ENCODE measurements at regions of chr2 and their contacts with region 1.

Region 1: GRCh38 chr2:28958689-28959088 is 22.4 kb upstream of the TOGARAM2 start:
- DNase-seq: peak; percentile 37
- H3K4me3 ChIP-seq: no peak overlapping the region; the same call in 1 of the 2 replicates
- CTCF ChIP-seq: peak; percentile 37

Region 2: GRCh38 chr2:29196792-29197788 is 238.4 kb after region 1 on chr2:
- CTCF ChIA-PET with region 1: interaction called, 19 read pairs
- POLR2A ChIA-PET with region 1: no interaction called
- DNase-seq: no peak
- H3K4me3 ChIP-seq: no peak overlapping the region
- CTCF ChIP-seq: peak; percentile 71

Region 3: GRCh38 chr2:29206941-29207340 is 248.3 kb after region 1 on chr2:
- CTCF ChIA-PET with region 1: interaction called, 16 read pairs
- POLR2A ChIA-PET with region 1: no interaction called
- DNase-seq: no peak
- H3K4me3 ChIP-seq: no peak overlapping the region
- CTCF ChIP-seq: no peak

Region 4: GRCh38 chr2:29309090-29310029 is 350.7 kb after region 1 on chr2:
- CTCF ChIA-PET with region 1: interaction called, 16 read pairs
- POLR2A ChIA-PET with region 1: no interaction called
- DNase-seq: no peak
- H3K4me3 ChIP-seq: no peak overlapping the region
- CTCF ChIP-seq: peak; percentile 73

Region 5: GRCh38 chr2:30072250-30072842 is 1113.7 kb after region 1 on chr2:
- CTCF ChIA-PET with region 1: interaction called, 11 read pairs
- POLR2A ChIA-PET with region 1: no interaction called
- DNase-seq: no peak
- H3K4me3 ChIP-seq: no peak overlapping the region
- CTCF ChIP-seq: peak; percentile 85